ENCODE measurements at regions of chr17 and their contacts with region 1.

Region 1: DNA sequence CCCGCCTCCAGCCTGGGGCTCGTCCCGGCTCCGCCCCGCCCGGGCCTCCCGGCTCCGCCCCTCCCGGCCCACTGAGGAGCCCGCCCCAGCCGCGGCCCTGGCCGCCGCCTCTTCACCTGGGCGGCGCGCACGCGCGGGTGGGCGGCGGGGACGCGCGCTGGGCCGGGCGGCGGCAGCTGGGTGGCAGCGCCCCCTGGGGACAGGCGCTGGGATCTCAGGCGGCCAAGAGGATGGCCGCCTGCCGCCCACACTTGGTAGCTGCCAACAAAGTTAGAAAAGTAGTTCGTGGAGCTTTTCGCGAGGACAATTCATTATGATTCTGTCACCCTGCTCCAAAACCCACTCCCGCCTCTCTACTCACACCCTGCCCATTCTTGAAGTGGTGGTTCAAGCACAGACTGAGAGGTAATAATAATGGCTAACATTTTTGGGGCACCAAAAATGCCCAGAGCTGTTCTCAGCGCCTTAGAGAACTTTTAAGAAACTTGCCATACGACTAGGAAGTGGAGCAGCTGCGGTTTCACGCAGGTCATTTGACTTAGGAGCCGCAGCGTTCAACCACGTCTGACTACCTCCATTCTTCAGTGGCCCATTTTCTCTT is 340 bp upstream of the MYO1D start:
- DNase-seq: peak; percentile 98
- H3K4me3 ChIP-seq: peak overlapping the region; percentile 76 to 95
- H3K27ac ChIP-seq: peak overlapping the region in 1 of 2 experiments; percentile 44; a peak in 3 of 4 replicates
- H3K4me1 ChIP-seq: peaks cover 0 to 8% of the 10 kb centered on the region in 2 experiments; a peak in 2 of 4 replicates
- H3K27me3 ChIP-seq: no peaks in the 10 kb centered on the region
- CTCF ChIP-seq: peak; percentile 76
- EP300 ChIP-seq: no peak
- RAD21 ChIP-seq: peak; percentile 71

Region 2: DNA sequence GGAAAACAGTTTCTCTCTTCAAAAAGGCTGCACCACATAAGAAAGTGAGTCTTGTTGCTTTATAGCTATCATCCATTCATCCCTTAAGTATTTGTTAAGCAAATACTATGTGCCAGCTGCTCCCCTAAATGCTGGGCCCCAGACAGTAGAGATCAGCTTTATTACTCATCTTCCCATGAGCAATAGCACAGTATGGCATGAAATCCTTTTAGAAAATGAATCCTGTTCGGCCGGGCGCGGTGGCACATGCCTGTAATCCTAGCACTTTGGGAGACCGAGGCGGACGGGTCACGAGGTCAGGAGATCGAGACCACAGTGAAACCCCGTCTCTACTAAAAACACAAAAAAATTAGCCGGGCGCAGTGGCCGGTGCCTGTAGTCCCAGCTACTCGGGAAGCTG is 99.8 kb before region 1 on chr17:
- CTCF ChIA-PET with region 1: interaction called, 162 read pairs
- POLR2A ChIA-PET with region 1: no interaction called
- DNase-seq: no peak
- H3K4me3 ChIP-seq: no peak overlapping the region
- H3K27ac ChIP-seq: no peak overlapping the region
- H3K4me1 ChIP-seq: no peaks in the 10 kb centered on the region; a peak in 1 of 4 replicates
- H3K27me3 ChIP-seq: no peaks in the 10 kb centered on the region
- CTCF ChIP-seq: no peak
- EP300 ChIP-seq: no peak
- RAD21 ChIP-seq: no peak

Region 3: GRCh38 chr17:32803544-32803943 is 73.7 kb before region 1 on chr17:
- CTCF ChIA-PET with region 1: interaction called, 20 read pairs
- POLR2A ChIA-PET with region 1: no interaction called
- DNase-seq: no peak
- H3K4me3 ChIP-seq: no peak overlapping the region
- H3K27ac ChIP-seq: peak overlapping the region in 1 of 2 experiments; percentile 73; a peak in 2 of 4 replicates
- H3K4me1 ChIP-seq: peaks cover 0 to 44% of the 10 kb centered on the region in 2 experiments; a peak in 3 of 4 replicates
- H3K27me3 ChIP-seq: no peaks in the 10 kb centered on the region
- CTCF ChIP-seq: no peak
- EP300 ChIP-seq: no peak
- RAD21 ChIP-seq: no peak

Region 4: DNA sequence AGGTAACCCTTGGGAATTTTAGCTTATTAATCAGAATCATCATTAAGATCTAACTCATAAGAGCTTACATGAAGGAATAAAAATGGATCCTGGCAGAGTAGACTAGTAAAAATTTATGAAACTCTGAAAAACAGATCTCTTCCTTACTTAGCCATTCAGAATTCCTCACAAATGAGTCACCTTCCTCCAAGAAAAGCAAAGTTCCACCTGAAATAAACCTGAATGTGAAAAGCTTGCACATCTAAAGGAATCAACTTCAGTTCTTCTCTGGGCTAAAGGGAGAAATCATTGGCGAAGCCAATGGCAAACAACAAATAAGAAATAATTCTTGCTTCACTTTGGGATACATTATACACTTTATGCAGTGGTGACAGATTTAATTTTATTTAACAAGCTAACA is 23.1 kb before region 1 on chr17:
- CTCF ChIA-PET with region 1: interaction called, 29 read pairs
- POLR2A ChIA-PET with region 1: no interaction called
- DNase-seq: no peak
- H3K4me3 ChIP-seq: no peak overlapping the region
- H3K27ac ChIP-seq: peak overlapping the region; percentile 24 to 53; a peak in 3 of 4 replicates
- H3K4me1 ChIP-seq: peaks cover 0 to 8% of the 10 kb centered on the region in 2 experiments; a peak in 1 of 4 replicates
- H3K27me3 ChIP-seq: no peaks in the 10 kb centered on the region
- CTCF ChIP-seq: no peak
- EP300 ChIP-seq: no peak
- RAD21 ChIP-seq: no peak

Region 5: GRCh38 chr17:32909787-32910369 is 32.6 kb after region 1 on chr17:
- CTCF ChIA-PET with region 1: interaction called, 18 read pairs
- POLR2A ChIA-PET with region 1: no interaction called
- DNase-seq: peak; percentile 71
- H3K4me3 ChIP-seq: no peak overlapping the region; a peak in 1 of 4 replicates
- H3K27ac ChIP-seq: no peak overlapping the region
- H3K4me1 ChIP-seq: no peaks in the 10 kb centered on the region; a peak in 1 of 4 replicates
- H3K27me3 ChIP-seq: no peaks in the 10 kb centered on the region
- CTCF ChIP-seq: peak; percentile 78
- EP300 ChIP-seq: no peak
- RAD21 ChIP-seq: peak; percentile 73